Panc1 (cell line): ENCODE measurements at regions of chr2 and their contacts with region 1.

Region 1: GRCh38 chr2:106104332-106105062 is 89.6 kb downstream of the UXS1 start:
- DNase-seq: peak; percentile 46
- ATAC-seq: peak; percentile 84
- H3K4me3 ChIP-seq: no peak overlapping the region
- H3K27ac ChIP-seq: no peak overlapping the region
- H3K4me1 ChIP-seq: no peaks in the 10 kb centered on the region
- H3K27me3 ChIP-seq: no peaks in the 10 kb centered on the region
- CTCF ChIP-seq: peak; percentile 95

Region 2: GRCh38 chr2:106542811-106543259 is 438.3 kb after region 1 on chr2:
- CTCF ChIA-PET with region 1: no interaction called
- POLR2A ChIA-PET with region 1: no interaction called
- in situ Hi-C with region 1: no loop called
- intact Hi-C with region 1: loop called (anchors 2 kb)
- DNase-seq: peak; percentile 39
- ATAC-seq: peak; percentile 94
- H3K4me3 ChIP-seq: peak overlapping the region; percentile 20 to 40
- H3K27ac ChIP-seq: no peak overlapping the region
- H3K4me1 ChIP-seq: no peaks in the 10 kb centered on the region
- H3K27me3 ChIP-seq: peaks cover 14% of the 10 kb centered on the region
- CTCF ChIP-seq: peak; percentile 94

Region 3: GRCh38 chr2:106582148-106583143 is 477.9 kb after region 1 on chr2:
- CTCF ChIA-PET with region 1: no interaction called
- POLR2A ChIA-PET with region 1: no interaction called
- in situ Hi-C with region 1: no loop called
- intact Hi-C with region 1: loop called (anchors 5 kb)
- DNase-seq: peak; percentile 64
- ATAC-seq: peak; percentile 90
- H3K4me3 ChIP-seq: peak overlapping the region; percentile 26 to 53
- H3K27ac ChIP-seq: no peak overlapping the region
- H3K4me1 ChIP-seq: peaks cover 3% of the 10 kb centered on the region; the same call in 1 of the 2 replicates
- H3K27me3 ChIP-seq: peaks cover 7% of the 10 kb centered on the region; the same call in 1 of the 2 replicates
- CTCF ChIP-seq: peak; percentile 93